Sigmoid colon (tissue), 7 donors: ENCODE measurements at regions of chr9 and their contacts with region 1.

Region 1: GRCh38 chr9:37119907-37120842 is at the start of gene ZCCHC7:
- DNase-seq: peak; percentile 98
- H3K4me3 ChIP-seq: peak within 1 kb of the TSS; percentile 67 to 95 (median 88)
- H3K27ac ChIP-seq: peak within 1 kb of the TSS; percentile 81 to 96 (median 92)
- H3K4me1 ChIP-seq: peaks cover 0 to 29% (median 18%) of the 10 kb centered on the region in 4 donors
- H3K27me3 ChIP-seq: no peaks in the 10 kb centered on the region
- CTCF ChIP-seq: no peak
- EP300 ChIP-seq: no peak
- POLR2A ChIP-seq: peak; percentile 68 to 72
- total RNA-seq, gene ZCCHC7: 19.1 to 24.6 (median 22.8) TPM

Region 2: DNA sequence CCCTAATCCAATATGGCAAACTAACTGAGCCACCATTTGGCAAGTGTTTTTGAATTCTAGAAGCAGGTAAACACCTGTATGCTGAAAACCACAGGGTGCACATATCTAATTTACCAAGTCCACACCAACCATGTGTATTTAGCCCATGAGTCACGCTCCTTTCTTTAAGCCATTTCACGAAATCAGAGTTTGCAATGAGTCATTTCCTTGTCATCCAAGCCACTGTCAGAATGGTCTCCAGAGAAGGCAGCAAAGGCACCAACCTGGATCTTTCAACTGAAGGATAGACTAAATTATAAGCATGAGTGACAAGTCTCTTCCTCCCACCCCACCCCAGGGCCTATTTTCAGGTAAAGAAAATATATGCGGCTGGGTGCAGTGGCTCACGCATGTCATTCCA is 196.1 kb before region 1 on chr9:
- intact Hi-C with region 1: no loop called
- DNase-seq: peak; percentile 3
- H3K4me3 ChIP-seq: no peak overlapping the region
- H3K27ac ChIP-seq: no peak overlapping the region
- H3K4me1 ChIP-seq: no peaks in the 10 kb centered on the region
- H3K27me3 ChIP-seq: peaks cover 0 to 8% (median 0%) of the 10 kb centered on the region in 3 donors
- CTCF ChIP-seq: no peak
- EP300 ChIP-seq: no peak
- POLR2A ChIP-seq: no peak

Region 3: GRCh38 chr9:37079370-37080164 is 40.6 kb before region 1 on chr9:
- intact Hi-C with region 1: loop called (anchors 1 kb)
- DNase-seq: peak; percentile 96
- H3K4me3 ChIP-seq: peak overlapping the region; percentile 74 to 98 (median 92)
- H3K27ac ChIP-seq: peak overlapping the region; percentile 88 to 92 (median 90)
- H3K4me1 ChIP-seq: peaks cover 0 to 20% (median 13%) of the 10 kb centered on the region in 4 donors
- H3K27me3 ChIP-seq: no peaks in the 10 kb centered on the region
- CTCF ChIP-seq: no peak
- EP300 ChIP-seq: no peak
- POLR2A ChIP-seq: peak; percentile 43 to 57